K562 (cell line): ENCODE measurements at regions of chr5 and their contacts with region 1.

Region 1: DNA sequence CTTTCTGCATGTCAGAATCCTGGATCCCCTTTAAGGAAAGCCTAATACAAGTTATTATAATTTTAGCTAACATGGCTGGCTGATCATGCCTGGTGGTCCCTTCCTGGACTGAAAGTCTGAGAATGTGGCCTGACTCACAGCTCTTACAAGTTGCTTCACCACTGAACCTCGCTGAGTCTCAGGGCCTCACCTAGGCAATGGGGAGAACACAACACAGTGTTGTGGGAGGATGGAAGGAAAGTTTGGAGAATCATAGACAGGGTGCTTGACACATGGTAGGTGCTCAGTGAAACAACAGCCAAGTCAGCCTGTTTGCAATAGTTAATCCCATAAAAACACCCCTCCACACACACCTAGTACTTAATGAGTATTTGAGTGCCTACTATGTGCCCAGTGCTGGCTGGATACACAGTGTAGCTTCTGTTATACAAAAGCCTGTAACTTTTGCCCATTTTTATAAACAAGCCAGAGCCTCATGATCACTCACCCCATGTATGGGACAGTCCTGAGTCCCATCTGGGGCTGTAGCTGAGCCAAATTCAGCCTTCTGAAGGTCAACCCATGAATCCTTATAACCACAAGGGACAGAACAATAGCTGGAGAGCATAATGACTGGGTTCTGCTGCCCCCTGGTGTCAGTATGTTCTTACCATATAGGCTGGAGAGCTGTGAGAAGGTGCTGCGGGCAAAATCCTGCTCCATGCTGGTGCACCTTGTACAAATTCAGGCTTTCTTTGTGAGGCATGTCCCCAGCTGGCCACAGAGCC is 3.9 kb downstream of the ACSL6 start:
- DNase-seq: peak; percentile 70 to 89 (median 74)
- ATAC-seq: peak; percentile 89
- H3K4me3 ChIP-seq: no peak overlapping the region
- H3K27ac ChIP-seq: no peak overlapping the region
- H3K4me1 ChIP-seq: peaks cover 8 to 18% of the 10 kb centered on the region in 2 experiments; a peak in 4 of 5 replicates
- H3K27me3 ChIP-seq: peaks cover 0 to 7% of the 10 kb centered on the region in 2 experiments; a peak in 2 of 5 replicates
- CTCF ChIP-seq: peak; percentile 83 to 97 (median 96)
- EP300 ChIP-seq: no peak
- POLR2A ChIP-seq: no peak
- RAD21 ChIP-seq: peak; percentile 94 to 99

Region 2: GRCh38 chr5:131436081-131436480 is 571.5 kb before region 1 on chr5:
- CTCF ChIA-PET with region 1: no interaction called
- POLR2A ChIA-PET with region 1: no interaction called
- in situ Hi-C with region 1: loop called (anchors 25 kb)
- intact Hi-C with region 1: no loop called
- DNase-seq: peak in 1 of 4 experiments; percentile 8
- ATAC-seq: peak; percentile 53; the same call in 1 of the 3 replicates
- H3K4me3 ChIP-seq: no peak overlapping the region
- H3K27ac ChIP-seq: no peak overlapping the region
- H3K4me1 ChIP-seq: no peaks in the 10 kb centered on the region; a peak in 1 of 5 replicates
- H3K27me3 ChIP-seq: no peaks in the 10 kb centered on the region
- CTCF ChIP-seq: no peak
- EP300 ChIP-seq: no peak
- POLR2A ChIP-seq: no peak
- RAD21 ChIP-seq: no peak

Region 3: GRCh38 chr5:131634996-131635754 is 372.4 kb before region 1 on chr5 and contains the start of gene RAPGEF6:
- CTCF ChIA-PET with region 1: no interaction called
- POLR2A ChIA-PET with region 1: interaction called, 3 read pairs
- in situ Hi-C with region 1: no loop called
- intact Hi-C with region 1: loop called (anchors 1 kb)
- DNase-seq: peak; percentile 89 to 99 (median 90)
- ATAC-seq: peak; percentile 87
- H3K4me3 ChIP-seq: peak within 1 kb of the TSS; percentile 70
- H3K27ac ChIP-seq: peak within 1 kb of the TSS; percentile 99
- H3K4me1 ChIP-seq: peaks cover 18 to 52% of the 10 kb centered on the region in 2 experiments
- H3K27me3 ChIP-seq: no peaks in the 10 kb centered on the region
- CTCF ChIP-seq: peak; percentile 4 to 34 (median 21); a peak in 5 of 6 replicates
- EP300 ChIP-seq: peak; percentile 74
- POLR2A ChIP-seq: peak; percentile 93
- RAD21 ChIP-seq: no peak; a peak in 1 of 4 replicates
- polyA plus RNA-seq, gene RAPGEF6: 2.7 to 3.6 TPM

Region 4: DNA sequence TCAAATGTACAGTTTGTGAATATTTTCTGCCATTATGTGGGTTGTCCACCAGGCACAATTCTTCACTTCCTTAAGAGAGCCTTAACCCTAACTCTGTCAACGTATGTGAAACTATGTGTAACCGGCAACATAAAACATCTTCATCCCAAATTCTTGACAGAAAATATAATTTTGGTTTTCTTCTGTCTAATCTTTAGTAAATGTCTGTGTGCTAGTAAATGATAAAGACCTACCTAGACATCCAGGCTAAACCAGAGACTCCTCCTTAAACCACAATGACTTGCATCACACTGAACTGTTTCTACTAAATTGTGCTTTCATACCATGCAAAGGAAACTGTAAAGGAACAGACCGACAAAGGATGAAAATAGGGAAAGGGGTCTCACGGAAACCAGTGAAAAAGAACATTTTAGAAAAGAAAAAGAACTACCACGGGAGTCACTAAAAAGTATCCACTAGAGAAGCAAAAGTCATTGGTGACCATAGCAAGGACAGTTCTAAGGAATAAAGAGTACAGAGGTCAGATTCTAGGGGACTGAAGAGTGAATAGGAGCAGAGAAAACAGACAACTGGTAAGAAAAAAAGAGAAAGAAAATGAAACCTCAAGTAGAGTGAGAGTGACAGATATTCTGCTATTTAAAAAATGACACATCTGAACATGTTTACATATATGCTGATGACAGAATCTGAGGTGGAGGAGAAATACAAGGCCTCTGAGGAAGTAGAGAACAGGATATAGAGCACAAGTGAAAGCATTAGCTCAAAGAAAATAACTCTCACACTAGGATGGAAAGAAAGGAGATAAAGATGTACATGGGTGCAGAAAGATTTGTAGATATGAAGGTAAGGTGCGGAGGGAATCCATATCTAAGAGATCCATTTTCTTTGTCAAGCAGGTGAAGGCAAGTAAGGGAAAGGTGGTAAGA is 260.1 kb before region 1 on chr5:
- CTCF ChIA-PET with region 1: no interaction called
- POLR2A ChIA-PET with region 1: no interaction called
- in situ Hi-C with region 1: no loop called
- intact Hi-C with region 1: loop called (anchors 5 kb)
- DNase-seq: peak; percentile 68 to 88 (median 76)
- ATAC-seq: peak; percentile 88
- H3K4me3 ChIP-seq: peak overlapping the region; percentile 2; the same call in 1 of the 2 replicates
- H3K27ac ChIP-seq: peak overlapping the region; percentile 86
- H3K4me1 ChIP-seq: peaks cover 18 to 55% of the 10 kb centered on the region in 2 experiments
- H3K27me3 ChIP-seq: no peaks in the 10 kb centered on the region
- CTCF ChIP-seq: peak in 1 of 3 experiments; percentile 30; a peak in 2 of 6 replicates
- EP300 ChIP-seq: peak; percentile 98
- POLR2A ChIP-seq: 0 out of 2 replicates have a peak, but pooled peaks have one; percentile 23
- RAD21 ChIP-seq: peak in 1 of 2 experiments; percentile 6; a peak in 2 of 4 replicates

Region 5: DNA sequence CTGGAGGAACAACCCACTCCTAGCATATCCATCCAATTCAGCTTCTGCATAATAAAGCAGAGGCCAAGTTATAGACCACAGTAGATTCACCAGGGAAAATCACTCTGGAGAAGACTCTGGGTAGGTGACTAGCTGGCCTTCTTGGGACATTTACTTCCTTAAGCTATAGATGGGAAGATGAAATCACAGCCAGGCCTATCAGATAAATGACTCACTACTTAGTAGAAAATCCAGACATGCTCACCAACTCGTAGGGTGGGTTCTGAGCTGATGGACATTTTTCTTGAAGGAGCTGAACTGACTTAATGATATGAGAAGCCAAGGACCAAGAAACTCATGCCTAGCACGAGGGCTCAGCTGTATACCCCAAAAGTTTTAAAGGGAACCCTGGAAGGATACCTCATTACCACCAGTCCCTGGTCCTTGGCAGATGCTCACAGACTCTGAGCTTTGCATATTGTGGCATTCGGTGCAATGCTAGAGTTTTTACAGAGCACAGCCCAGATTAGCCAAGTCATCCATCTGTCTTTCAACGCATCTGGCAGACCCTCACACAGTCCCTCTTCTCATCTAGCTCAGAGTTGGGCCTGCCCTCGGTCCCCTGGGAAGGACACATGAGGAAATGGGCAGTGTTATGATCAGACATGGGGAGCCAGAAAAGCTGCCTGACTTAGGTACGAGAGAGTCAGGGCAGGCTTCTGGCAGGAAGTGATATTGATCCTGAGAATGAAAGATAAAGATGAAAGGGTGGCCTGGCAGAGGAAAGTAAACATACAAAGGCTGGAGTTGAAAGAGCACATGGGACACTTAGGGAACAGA is 11.2 kb before region 1 on chr5:
- CTCF ChIA-PET with region 1: no interaction called
- POLR2A ChIA-PET with region 1: interaction called, 10 read pairs
- in situ Hi-C with region 1: no loop called
- intact Hi-C with region 1: no loop called
- DNase-seq: peak; percentile 21 to 84 (median 48)
- ATAC-seq: peak; percentile 52
- H3K4me3 ChIP-seq: no peak overlapping the region
- H3K27ac ChIP-seq: peak overlapping the region; percentile 49
- H3K4me1 ChIP-seq: peaks cover 54 to 58% of the 10 kb centered on the region in 2 experiments
- H3K27me3 ChIP-seq: no peaks in the 10 kb centered on the region
- CTCF ChIP-seq: no peak
- EP300 ChIP-seq: peak; percentile 91
- POLR2A ChIP-seq: no peak
- RAD21 ChIP-seq: no peak; a peak in 1 of 4 replicates